Prostate gland (tissue), 2 donors: ENCODE measurements at regions of chr16 and their contacts with region 1.

Region 1: GRCh38 chr16:21708533-21709115 is 44.9 kb downstream of the OTOA start:
- DNase-seq: peak; percentile 68
- H3K4me3 ChIP-seq: no peak overlapping the region
- H3K27ac ChIP-seq: no peak overlapping the region
- H3K4me1 ChIP-seq: no peaks in the 10 kb centered on the region
- H3K27me3 ChIP-seq: no peaks in the 10 kb centered on the region
- CTCF ChIP-seq: peak; percentile 39 to 73 (median 72)
- POLR2A ChIP-seq: no peak

Region 2: GRCh38 chr16:21584817-21585216 is 123.8 kb before region 1 on chr16:
- intact Hi-C with region 1: loop called (anchors 5 kb)
- DNase-seq: no peak
- H3K4me3 ChIP-seq: no peak overlapping the region
- H3K27ac ChIP-seq: no peak overlapping the region
- H3K4me1 ChIP-seq: no peaks in the 10 kb centered on the region
- H3K27me3 ChIP-seq: no peaks in the 10 kb centered on the region
- CTCF ChIP-seq: no peak
- POLR2A ChIP-seq: no peak

Region 3: GRCh38 chr16:21656795-21657768 is 51.5 kb before region 1 on chr16:
- intact Hi-C with region 1: loop called (anchors 5 kb)
- DNase-seq: no peak
- H3K4me3 ChIP-seq: no peak overlapping the region
- H3K27ac ChIP-seq: no peak overlapping the region
- H3K4me1 ChIP-seq: no peaks in the 10 kb centered on the region
- H3K27me3 ChIP-seq: no peaks in the 10 kb centered on the region
- CTCF ChIP-seq: peak; percentile 51 to 79 (median 67)
- POLR2A ChIP-seq: no peak